Ascending aorta (tissue), 2 donors: ENCODE measurements at regions of chr9 and their contacts with region 1.

Region 1: DNA sequence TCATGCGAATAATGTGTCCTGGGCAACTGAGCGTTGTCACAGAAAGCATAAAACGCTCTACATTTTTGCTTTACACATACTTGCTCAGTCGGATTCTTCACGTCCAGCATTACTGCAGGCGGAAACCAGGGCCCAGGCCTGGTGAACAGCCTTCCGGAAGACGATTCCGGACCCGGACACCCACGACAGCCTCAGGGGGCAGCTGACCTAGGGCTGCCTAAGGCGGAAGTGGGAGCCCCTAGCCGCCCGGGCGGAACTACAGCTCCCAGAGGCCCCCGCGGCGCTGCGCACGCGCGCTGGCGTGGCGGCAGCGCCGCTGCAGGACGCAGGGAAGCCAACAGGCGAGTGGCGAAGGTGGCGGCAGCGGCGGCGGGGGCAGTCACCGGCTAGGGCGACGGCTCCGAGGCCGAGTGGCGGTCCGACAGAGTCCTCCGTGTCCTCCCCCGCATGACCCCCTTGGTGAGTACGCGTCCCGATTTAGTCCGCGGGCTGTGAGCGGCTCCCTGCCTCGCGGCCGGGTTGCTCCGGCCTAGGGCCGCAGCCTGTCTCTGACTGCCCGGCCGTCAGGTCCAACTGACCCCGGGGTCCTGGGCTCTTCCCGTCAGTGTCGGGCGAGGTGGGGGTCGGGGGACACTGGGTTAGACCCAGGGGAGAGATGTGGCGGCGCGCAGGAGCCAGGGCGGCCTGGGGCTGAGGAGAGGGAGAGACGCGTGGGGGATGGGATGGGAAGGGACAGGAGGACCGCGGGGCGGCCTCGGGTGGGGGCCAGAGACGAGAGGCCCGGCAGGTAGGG is at the start of gene GAPVD1:
- DNase-seq: peak; percentile 43 to 94
- H3K4me3 ChIP-seq: peak within 1 kb of the TSS; percentile 94 to 99
- H3K27ac ChIP-seq: peak within 1 kb of the TSS; percentile 75 to 78
- H3K4me1 ChIP-seq: peaks cover 0 to 17% of the 10 kb centered on the region in 2 donors
- H3K27me3 ChIP-seq: no peaks in the 10 kb centered on the region
- CTCF ChIP-seq: peak in 2 of 3 experiments; percentile 34 to 45
- total RNA-seq, gene GAPVD1: 18.9 TPM

Region 2: DNA sequence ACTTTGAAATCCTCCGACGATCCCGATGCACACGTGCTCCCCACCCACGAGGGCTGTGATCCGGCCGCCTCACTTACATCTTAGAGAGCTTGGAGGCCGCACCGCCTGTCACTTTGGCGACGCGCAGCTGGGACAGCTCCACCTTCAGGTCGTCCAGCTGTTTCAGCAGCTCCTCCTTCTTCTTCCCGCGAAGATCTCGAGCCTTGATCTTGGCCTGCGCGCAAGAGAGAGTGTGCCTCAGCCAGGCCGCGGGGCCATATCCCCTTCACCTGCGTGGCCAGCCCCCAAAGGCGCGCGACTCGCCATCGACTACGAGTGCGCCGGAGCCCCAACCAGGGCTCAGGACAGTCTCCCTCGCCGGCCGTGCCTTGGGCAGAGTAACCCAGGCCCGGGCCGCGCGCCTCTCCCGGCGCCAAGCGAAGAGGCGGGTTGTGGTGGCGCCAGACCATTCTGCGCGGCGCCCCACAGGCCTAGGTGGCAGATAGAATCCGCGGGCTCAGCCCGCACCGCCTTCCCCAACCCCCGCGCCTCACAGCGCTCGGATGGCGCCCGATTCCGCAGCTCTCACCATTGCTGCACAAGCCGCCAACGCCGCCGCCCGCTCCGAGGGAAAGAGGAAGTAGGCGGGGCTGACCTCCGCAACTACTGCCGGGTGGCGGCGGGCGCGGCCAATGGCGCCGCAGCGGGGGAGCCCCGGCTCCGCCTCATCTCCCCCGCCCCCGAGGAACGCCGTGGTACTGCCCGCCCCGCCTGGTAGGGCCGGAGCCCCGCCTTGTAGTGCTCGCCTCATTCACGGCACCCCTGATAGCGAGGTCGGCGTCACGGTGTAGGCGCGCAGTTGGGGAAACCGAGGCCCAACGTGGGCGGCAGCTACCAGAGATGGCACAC is 400.1 kb before region 1 on chr9 and contains the starts of genes ARPC5L and RPL35:
- intact Hi-C with region 1: loop called (anchors 5 kb)
- DNase-seq: peak; percentile 74 to 97
- H3K4me3 ChIP-seq: peak within 1 kb of the TSS; percentile 88 to 98
- H3K27ac ChIP-seq: peak within 1 kb of the TSS; percentile 90 to 97
- H3K4me1 ChIP-seq: peaks cover 8 to 13% of the 10 kb centered on the region in 2 donors
- H3K27me3 ChIP-seq: no peaks in the 10 kb centered on the region
- CTCF ChIP-seq: peak in 2 of 3 experiments; percentile 24 to 25
- total RNA-seq, gene ARPC5L: 12.0 TPM
- total RNA-seq, gene RPL35: 2,123 TPM

Region 3: GRCh38 chr9:125200210-125201047 is 61.3 kb before region 1 on chr9 and contains the start of gene RABEPK:
- intact Hi-C with region 1: loop called (anchors 5 kb)
- DNase-seq: peak; percentile 64 to 94
- H3K4me3 ChIP-seq: peak within 1 kb of the TSS; percentile 77 to 78
- H3K27ac ChIP-seq: peak within 1 kb of the TSS; percentile 89 to 95
- H3K4me1 ChIP-seq: peaks cover 0 to 2% of the 10 kb centered on the region in 2 donors
- H3K27me3 ChIP-seq: no peaks in the 10 kb centered on the region
- CTCF ChIP-seq: no peak
- total RNA-seq, gene RABEPK: 20.4 TPM

Region 4: GRCh38 chr9:125646621-125647100 is 385.0 kb after region 1 on chr9:
- intact Hi-C with region 1: no loop called
- DNase-seq: no peak
- H3K4me3 ChIP-seq: peak overlapping the region in 1 of 2 donors; percentile 27
- H3K27ac ChIP-seq: peak overlapping the region in 1 of 2 donors; percentile 17
- H3K4me1 ChIP-seq: no peaks in the 10 kb centered on the region
- H3K27me3 ChIP-seq: no peaks in the 10 kb centered on the region
- CTCF ChIP-seq: no peak